ENCODE measurements at regions of chr1 and their contacts with region 1.

Region 1: DNA sequence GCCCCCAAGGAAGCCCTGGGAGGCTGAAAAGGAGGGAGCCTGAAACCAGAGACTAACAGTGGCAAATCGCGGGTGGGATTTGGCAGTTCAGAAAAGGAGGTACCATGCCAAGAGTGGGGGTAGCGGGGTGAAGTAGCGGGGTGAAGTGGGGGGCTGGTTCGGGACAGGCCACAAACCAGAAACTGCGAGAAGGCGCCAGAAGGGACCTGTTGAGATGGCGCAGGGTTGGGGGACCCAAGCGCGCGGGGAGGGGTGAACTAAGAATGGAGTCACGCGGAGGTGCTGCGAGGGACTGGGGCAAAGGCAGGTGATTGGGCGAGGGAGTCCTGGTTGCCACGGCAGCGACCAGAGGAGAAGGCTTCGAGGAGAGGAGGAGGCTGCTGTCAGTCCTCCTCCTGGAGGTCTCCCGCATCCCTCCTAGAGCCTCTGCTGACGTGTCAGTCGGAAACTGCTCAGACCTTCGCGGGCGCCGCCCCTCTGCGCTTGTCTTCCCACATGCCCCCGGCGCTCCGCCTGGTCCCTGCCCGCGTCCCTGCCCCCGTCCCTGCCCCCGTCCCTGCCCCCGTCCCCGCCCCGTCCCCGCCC is 438 bp upstream of the MIA3 start:
- DNase-seq: peak; percentile 93
- H3K4me3 ChIP-seq: peak overlapping the region; percentile 91 to 94
- H3K27ac ChIP-seq: peak overlapping the region; percentile 49 to 61
- H3K4me1 ChIP-seq: peaks cover 8% of the 10 kb centered on the region
- H3K27me3 ChIP-seq: no peaks in the 10 kb centered on the region
- CTCF ChIP-seq: no peak
- POLR2A ChIP-seq: no peak

Region 2: GRCh38 chr1:222465211-222466041 is 152.0 kb before region 1 on chr1:
- intact Hi-C with region 1: loop called (anchors 5 kb)
- DNase-seq: peak; percentile 90
- H3K4me3 ChIP-seq: peak overlapping the region; percentile 53 to 54
- H3K27ac ChIP-seq: peak overlapping the region; percentile 67 to 89
- H3K4me1 ChIP-seq: no peaks in the 10 kb centered on the region
- H3K27me3 ChIP-seq: no peaks in the 10 kb centered on the region
- CTCF ChIP-seq: peak; percentile 100
- POLR2A ChIP-seq: no peak

Measured in testis (tissue), 5 donors.